Aorta (tissue), 5 donors: ENCODE measurements at regions of chr6 and their contacts with region 1.

Region 1: DNA sequence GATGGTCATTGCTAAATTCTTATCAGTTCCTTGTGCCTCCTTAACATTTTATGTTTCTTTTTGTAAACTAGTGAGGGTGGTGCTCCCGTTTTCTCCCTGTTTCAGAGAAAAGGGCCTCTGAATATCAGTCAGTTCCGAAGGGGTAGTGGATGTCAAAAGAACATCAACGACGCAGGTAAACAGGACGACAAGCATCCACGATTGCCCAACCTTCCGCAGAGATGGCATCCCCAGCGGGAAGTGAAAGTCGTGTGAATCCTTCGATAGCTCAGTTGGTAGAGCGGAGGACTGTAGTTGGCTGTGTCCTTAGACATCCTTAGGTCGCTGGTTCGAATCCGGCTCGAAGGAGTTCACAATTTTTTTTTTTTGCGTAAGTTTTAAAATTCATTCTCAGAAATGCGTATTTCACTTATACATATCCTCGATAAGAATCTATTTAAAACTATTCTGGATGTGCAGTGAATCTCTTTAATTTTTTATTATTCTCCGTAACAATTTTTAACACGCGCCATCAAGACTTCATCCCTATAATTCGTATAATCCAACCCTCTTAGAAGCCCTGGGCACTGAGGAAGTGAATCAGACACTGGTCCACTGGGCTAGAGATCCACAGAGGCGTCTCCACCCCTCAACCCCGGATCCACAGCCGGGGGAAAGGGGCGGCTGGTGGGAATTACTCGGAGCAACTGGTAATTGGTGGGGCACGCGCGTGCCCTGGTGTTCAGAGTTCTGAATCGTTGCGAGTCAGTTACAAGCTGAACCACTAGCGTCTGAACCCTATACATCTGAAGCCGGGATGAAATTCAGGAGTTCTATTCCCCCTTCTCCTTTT is 27.9 kb upstream of the ABT1 start:
- DNase-seq: peak; percentile 93 to 97
- ATAC-seq: peak; percentile 93
- H3K4me3 ChIP-seq: peak overlapping the region; percentile 74 to 79
- H3K27ac ChIP-seq: peak overlapping the region in 1 of 2 donors; percentile 44
- H3K4me1 ChIP-seq: peaks cover 0 to 2% of the 10 kb centered on the region in 2 donors
- H3K27me3 ChIP-seq: no peaks in the 10 kb centered on the region

Region 2: GRCh38 chr6:26149240-26149639 is 419.6 kb before region 1 on chr6:
- intact Hi-C with region 1: no loop called
- DNase-seq: no peak
- ATAC-seq: no peak
- H3K4me3 ChIP-seq: no peak overlapping the region
- H3K27ac ChIP-seq: no peak overlapping the region
- H3K4me1 ChIP-seq: no peaks in the 10 kb centered on the region
- H3K27me3 ChIP-seq: no peaks in the 10 kb centered on the region

Region 3: GRCh38 chr6:26342106-26343004 is 226.5 kb before region 1 on chr6:
- intact Hi-C with region 1: loop called in 1 of 2 experiments (anchors 5 kb)
- DNase-seq: no peak
- ATAC-seq: no peak
- H3K4me3 ChIP-seq: no peak overlapping the region
- H3K27ac ChIP-seq: no peak overlapping the region
- H3K4me1 ChIP-seq: no peaks in the 10 kb centered on the region
- H3K27me3 ChIP-seq: no peaks in the 10 kb centered on the region

Region 4: DNA sequence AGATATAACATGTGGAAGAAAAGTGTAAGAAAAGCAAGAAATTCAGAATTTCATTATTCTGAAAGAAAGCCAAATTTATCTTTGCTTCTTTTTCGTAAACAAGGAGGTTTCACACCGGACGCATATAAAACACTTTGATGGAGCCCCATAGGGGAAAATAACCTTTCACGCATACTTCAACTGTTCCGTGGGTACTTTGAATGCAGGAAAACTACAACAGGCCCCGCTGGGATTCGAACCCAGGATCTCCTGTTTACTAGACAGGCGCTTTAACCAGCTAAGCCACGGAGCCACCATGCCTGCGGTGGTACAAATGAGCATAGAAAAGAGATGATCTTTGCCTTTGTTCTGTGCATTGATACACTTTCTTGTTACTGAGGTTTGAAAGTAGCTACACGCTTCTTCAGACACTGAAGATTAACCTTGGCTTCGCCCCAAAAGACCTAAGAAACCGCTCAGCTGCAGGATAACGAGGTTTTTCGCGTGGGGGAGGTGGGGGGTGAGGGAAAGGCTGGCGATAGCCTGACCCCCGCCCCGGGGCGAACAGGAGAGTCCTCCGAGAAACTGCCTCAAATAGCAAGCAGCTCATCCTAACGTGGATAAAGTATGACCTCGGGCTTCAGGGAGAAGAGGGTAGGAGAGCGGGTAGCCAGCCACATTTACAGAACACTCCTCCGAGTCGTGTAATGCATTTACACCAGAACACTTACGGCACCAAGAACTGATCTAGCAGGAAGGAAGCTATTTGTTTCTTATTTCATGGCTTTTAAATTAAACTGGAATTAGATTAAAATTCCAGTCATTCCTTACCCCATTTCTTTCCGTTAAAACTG is 35.9 kb before region 1 on chr6:
- intact Hi-C with region 1: loop called in 1 of 2 experiments (anchors 1 kb)
- DNase-seq: peak; percentile 92 to 94
- ATAC-seq: peak; percentile 88
- H3K4me3 ChIP-seq: peak overlapping the region; percentile 76 to 100
- H3K27ac ChIP-seq: peak overlapping the region; percentile 3 to 85
- H3K4me1 ChIP-seq: peaks cover 0 to 2% of the 10 kb centered on the region in 2 donors
- H3K27me3 ChIP-seq: no peaks in the 10 kb centered on the region

Region 5: GRCh38 chr6:26537846-26538571 is 30.8 kb before region 1 on chr6 and contains the start of gene HMGN4:
- intact Hi-C with region 1: loop called in 1 of 2 experiments (anchors 1 kb)
- DNase-seq: peak; percentile 88 to 91
- ATAC-seq: peak; percentile 94
- H3K4me3 ChIP-seq: peak within 1 kb of the TSS; percentile 73 to 79
- H3K27ac ChIP-seq: peak within 1 kb of the TSS; percentile 83 to 87
- H3K4me1 ChIP-seq: peaks cover 2 to 3% of the 10 kb centered on the region in 2 donors
- H3K27me3 ChIP-seq: no peaks in the 10 kb centered on the region
- total RNA-seq, gene HMGN4: 48.4 to 69.0 TPM

Region 6: GRCh38 chr6:26553635-26554446 is 15.0 kb before region 1 on chr6:
- intact Hi-C with region 1: loop called (anchors 2 kb)
- DNase-seq: peak; percentile 82 to 93
- ATAC-seq: peak; percentile 92
- H3K4me3 ChIP-seq: peak overlapping the region; percentile 36 to 60
- H3K27ac ChIP-seq: peak overlapping the region; percentile 12 to 45
- H3K4me1 ChIP-seq: peaks cover 0 to 4% of the 10 kb centered on the region in 2 donors
- H3K27me3 ChIP-seq: no peaks in the 10 kb centered on the region

Region 7: GRCh38 chr6:26596579-26597388 is 28.0 kb after region 1 on chr6 and contains the start of gene ABT1:
- intact Hi-C with region 1: loop called in 1 of 2 experiments (anchors 2 kb)
- DNase-seq: peak; percentile 99
- ATAC-seq: peak; percentile 98
- H3K4me3 ChIP-seq: peak within 1 kb of the TSS; percentile 61 to 74
- H3K27ac ChIP-seq: peak within 1 kb of the TSS in 1 of 2 donors; percentile 64
- H3K4me1 ChIP-seq: peaks cover 0 to 3% of the 10 kb centered on the region in 2 donors
- H3K27me3 ChIP-seq: peaks cover 0 to 2% of the 10 kb centered on the region in 2 donors
- total RNA-seq, gene ABT1: 10.7 TPM

Region 8: GRCh38 chr6:26754212-26754611 is 185.4 kb after region 1 on chr6:
- intact Hi-C with region 1: no loop called
- DNase-seq: no peak
- ATAC-seq: no peak
- H3K4me3 ChIP-seq: no peak overlapping the region
- H3K27ac ChIP-seq: no peak overlapping the region
- H3K4me1 ChIP-seq: no peaks in the 10 kb centered on the region
- H3K27me3 ChIP-seq: no peaks in the 10 kb centered on the region